IMR-90 (cell line): ENCODE measurements at regions of chr1 and their contacts with region 1.

Region 1: DNA sequence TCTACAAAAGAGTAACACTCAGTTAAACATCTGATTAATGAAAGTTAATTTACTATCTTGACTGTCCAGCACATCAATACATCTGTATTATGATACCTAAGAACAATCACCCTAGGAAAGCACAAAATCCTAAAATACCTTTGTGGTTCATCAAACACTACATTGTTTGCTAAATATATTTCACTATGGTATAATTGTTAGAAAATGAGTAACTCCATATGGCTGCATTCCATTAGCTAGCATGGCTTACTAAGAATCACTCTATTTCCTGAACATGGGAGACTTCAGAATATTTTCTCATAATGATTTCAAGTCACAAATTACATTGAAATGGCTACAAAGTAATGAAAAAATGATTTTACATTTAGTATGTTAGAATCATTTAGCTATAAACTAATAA is 12.5 kb downstream of the TRMT1L start:
- DNase-seq: peak; percentile 65
- ATAC-seq: peak; percentile 85
- H3K4me3 ChIP-seq: no peak overlapping the region
- H3K27ac ChIP-seq: no peak overlapping the region
- H3K4me1 ChIP-seq: no peaks in the 10 kb centered on the region
- H3K27me3 ChIP-seq: no peaks in the 10 kb centered on the region
- CTCF ChIP-seq: no peak
- POLR2A ChIP-seq: no peak
- RAD21 ChIP-seq: no peak

Region 2: GRCh38 chr1:185080422-185080821 is 63.8 kb before region 1 on chr1:
- CTCF ChIA-PET with region 1: no interaction called
- POLR2A ChIA-PET with region 1: no interaction called
- dilution Hi-C with region 1: no loop called
- in situ Hi-C with region 1: no loop called
- intact Hi-C with region 1: no loop called
- DNase-seq: no peak
- ATAC-seq: no peak
- H3K4me3 ChIP-seq: no peak overlapping the region
- H3K27ac ChIP-seq: no peak overlapping the region
- H3K4me1 ChIP-seq: no peaks in the 10 kb centered on the region
- H3K27me3 ChIP-seq: no peaks in the 10 kb centered on the region
- CTCF ChIP-seq: no peak
- POLR2A ChIP-seq: no peak
- RAD21 ChIP-seq: no peak

Region 3: GRCh38 chr1:185108321-185108720 is 35.9 kb before region 1 on chr1:
- CTCF ChIA-PET with region 1: no interaction called
- POLR2A ChIA-PET with region 1: no interaction called
- dilution Hi-C with region 1: no loop called
- in situ Hi-C with region 1: no loop called
- intact Hi-C with region 1: loop called (anchors 5 kb)
- DNase-seq: peak; percentile 13
- ATAC-seq: no peak
- H3K4me3 ChIP-seq: no peak overlapping the region
- H3K27ac ChIP-seq: no peak overlapping the region
- H3K4me1 ChIP-seq: no peaks in the 10 kb centered on the region
- H3K27me3 ChIP-seq: no peaks in the 10 kb centered on the region
- CTCF ChIP-seq: no peak
- POLR2A ChIP-seq: no peak
- RAD21 ChIP-seq: no peak

Region 4: GRCh38 chr1:185166106-185166505 is 21.9 kb after region 1 on chr1:
- CTCF ChIA-PET with region 1: no interaction called
- POLR2A ChIA-PET with region 1: no interaction called
- dilution Hi-C with region 1: no loop called
- in situ Hi-C with region 1: no loop called
- intact Hi-C with region 1: no loop called
- DNase-seq: no peak
- ATAC-seq: no peak
- H3K4me3 ChIP-seq: no peak overlapping the region
- H3K27ac ChIP-seq: no peak overlapping the region
- H3K4me1 ChIP-seq: no peaks in the 10 kb centered on the region; the same call in 1 of the 2 replicates
- H3K27me3 ChIP-seq: no peaks in the 10 kb centered on the region
- CTCF ChIP-seq: no peak
- POLR2A ChIP-seq: no peak
- RAD21 ChIP-seq: no peak